ENCODE measurements at regions of chr7 and their contacts with region 1.

Region 1: DNA sequence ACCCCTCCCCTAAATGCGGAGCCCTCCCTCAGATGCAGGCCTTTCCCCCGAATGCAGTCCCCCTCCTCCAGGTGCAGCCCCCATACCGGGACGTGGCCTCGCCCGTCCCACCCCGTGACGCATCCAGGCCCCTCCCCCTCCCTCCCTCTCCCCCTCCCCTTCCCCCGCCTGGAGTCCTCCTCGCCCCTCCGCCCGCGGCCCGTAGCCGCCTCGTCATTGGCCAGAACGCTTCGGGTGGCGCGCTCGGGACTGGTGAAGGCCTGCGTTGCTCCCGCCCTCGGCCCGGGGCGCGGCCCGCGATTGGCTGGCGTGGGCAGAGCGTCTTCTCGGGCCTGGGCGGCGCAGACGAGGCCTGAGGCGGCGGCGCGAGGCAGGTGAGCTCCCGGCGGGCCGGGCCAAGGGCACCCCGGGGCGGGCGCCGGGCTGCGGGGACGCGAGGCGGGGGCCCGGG is 16.0 kb upstream of the SUN1 start:
- DNase-seq: peak; percentile 96 to 98 (median 97)
- H3K4me3 ChIP-seq: peak overlapping the region in 1 of 2 donors; percentile 56
- H3K4me3 Mint-ChIP-seq: peak overlapping the region; percentile 63 to 89 (median 77)
- H3K27ac ChIP-seq: peak overlapping the region; percentile 16
- H3K27ac Mint-ChIP-seq: peak overlapping the region in 1 of 7 donors; percentile 41
- H3K4me1 ChIP-seq: peaks cover 57% of the 10 kb centered on the region
- H3K4me1 Mint-ChIP-seq: peaks cover 46 to 74% (median 60%) of the 10 kb centered on the region in 4 donors
- H3K27me3 ChIP-seq: no peaks in the 10 kb centered on the region
- H3K27me3 Mint-ChIP-seq: no peaks in the 10 kb centered on the region

Region 2: GRCh38 chr7:831596-832166 is 15.4 kb after region 1 on chr7:
- CTCF ChIA-PET with region 1: interaction called, 18 read pairs
- POLR2A ChIA-PET with region 1: interaction called, 50 read pairs
- intact Hi-C with region 1: loop called (anchors 1 kb)
- DNase-seq: peak in 4 of 5 donors; percentile 39 to 58 (median 47)
- H3K4me3 ChIP-seq: peak overlapping the region in 1 of 2 donors; percentile 8
- H3K4me3 Mint-ChIP-seq: peak overlapping the region; percentile 81 to 91 (median 88)
- H3K27ac ChIP-seq: peak overlapping the region; percentile 73
- H3K27ac Mint-ChIP-seq: peak overlapping the region; percentile 96 to 99 (median 97)
- H3K4me1 ChIP-seq: peaks cover 41% of the 10 kb centered on the region
- H3K4me1 Mint-ChIP-seq: peaks cover 33 to 72% (median 49%) of the 10 kb centered on the region in 4 donors
- H3K27me3 ChIP-seq: no peaks in the 10 kb centered on the region
- H3K27me3 Mint-ChIP-seq: no peaks in the 10 kb centered on the region

Region 3: DNA sequence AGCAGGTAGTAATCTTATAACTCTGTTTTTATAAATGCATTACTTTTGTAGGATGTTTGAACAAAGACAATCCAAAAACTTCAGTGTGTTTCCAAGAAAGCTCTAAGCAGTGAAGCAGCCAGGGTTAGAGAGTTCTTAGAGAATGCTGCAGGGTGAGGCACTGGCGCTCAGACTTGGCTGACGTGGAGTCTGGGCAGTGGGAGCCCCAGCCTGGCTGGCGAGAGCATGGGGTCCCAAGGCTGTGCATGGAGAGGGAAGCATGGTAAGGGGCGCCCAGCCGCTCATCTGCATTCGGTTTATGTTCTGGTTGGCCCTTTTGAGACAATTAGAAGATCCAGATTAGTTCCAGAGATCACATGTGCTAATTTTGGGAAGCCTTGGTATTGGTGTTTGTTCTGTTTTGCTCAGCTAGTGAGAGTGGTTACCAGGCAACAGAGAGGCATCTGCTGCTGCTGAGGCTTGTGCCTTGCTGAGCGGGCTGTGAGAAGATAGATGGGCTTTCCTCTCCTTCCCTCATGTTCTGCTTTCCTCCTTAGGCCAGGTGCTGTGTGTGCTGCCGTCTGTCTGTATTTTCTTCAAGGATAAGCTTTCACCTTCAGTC is 26.2 kb after region 1 on chr7:
- CTCF ChIA-PET with region 1: no interaction called
- POLR2A ChIA-PET with region 1: no interaction called
- intact Hi-C with region 1: no loop called
- DNase-seq: no peak
- H3K4me3 ChIP-seq: no peak overlapping the region
- H3K4me3 Mint-ChIP-seq: no peak overlapping the region
- H3K27ac ChIP-seq: no peak overlapping the region
- H3K27ac Mint-ChIP-seq: no peak overlapping the region
- H3K4me1 ChIP-seq: no peaks in the 10 kb centered on the region
- H3K4me1 Mint-ChIP-seq: peaks cover 2 to 6% (median 4%) of the 10 kb centered on the region in 4 donors
- H3K27me3 ChIP-seq: no peaks in the 10 kb centered on the region
- H3K27me3 Mint-ChIP-seq: no peaks in the 10 kb centered on the region

Region 4: DNA sequence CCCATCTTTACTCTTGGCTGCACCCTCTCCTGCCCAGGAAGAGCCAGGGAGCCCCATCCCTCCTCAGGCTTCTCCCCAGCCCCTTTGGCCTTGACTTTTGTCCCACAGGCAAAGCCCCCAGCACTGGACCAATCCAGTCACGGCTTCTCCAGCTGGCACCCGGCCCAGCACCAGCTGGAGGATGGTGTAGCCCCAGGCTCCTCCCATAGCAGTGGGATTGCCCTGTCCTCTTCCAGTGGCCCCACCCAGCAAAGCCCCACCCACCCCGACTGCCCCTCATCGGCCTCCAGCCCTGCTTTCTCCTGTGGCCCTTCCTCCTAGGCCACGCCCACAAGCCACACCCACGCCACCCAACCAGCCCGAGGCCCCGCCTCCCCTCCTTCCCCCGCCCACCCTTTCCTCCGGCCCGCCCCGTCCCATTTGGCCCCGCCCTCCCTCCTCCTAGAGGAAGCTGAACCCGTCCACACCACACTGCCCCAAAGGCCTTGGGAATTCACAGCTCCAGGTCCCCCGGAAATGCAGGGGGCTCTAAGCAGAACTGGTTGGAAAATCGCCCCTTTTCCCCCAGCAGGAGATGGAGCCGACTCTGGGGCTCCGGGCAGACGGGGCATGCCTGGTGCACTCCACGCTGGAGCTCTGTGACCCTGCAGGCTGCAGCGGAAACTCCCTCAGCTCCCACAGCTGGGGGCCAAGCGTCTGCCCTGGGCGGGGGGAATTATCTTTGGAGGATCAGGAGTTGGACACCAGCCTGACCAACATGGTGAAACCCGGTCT is 85.2 kb after region 1 on chr7:
- CTCF ChIA-PET with region 1: no interaction called
- POLR2A ChIA-PET with region 1: no interaction called
- intact Hi-C with region 1: no loop called
- DNase-seq: peak in 1 of 5 donors; percentile 44
- H3K4me3 ChIP-seq: no peak overlapping the region
- H3K4me3 Mint-ChIP-seq: no peak overlapping the region
- H3K27ac ChIP-seq: no peak overlapping the region
- H3K27ac Mint-ChIP-seq: no peak overlapping the region
- H3K4me1 ChIP-seq: peaks cover 3% of the 10 kb centered on the region
- H3K4me1 Mint-ChIP-seq: no peaks in the 10 kb centered on the region
- H3K27me3 ChIP-seq: no peaks in the 10 kb centered on the region
- H3K27me3 Mint-ChIP-seq: peaks cover 0 to 3% of the 10 kb centered on the region in 2 donors

Region 5: DNA sequence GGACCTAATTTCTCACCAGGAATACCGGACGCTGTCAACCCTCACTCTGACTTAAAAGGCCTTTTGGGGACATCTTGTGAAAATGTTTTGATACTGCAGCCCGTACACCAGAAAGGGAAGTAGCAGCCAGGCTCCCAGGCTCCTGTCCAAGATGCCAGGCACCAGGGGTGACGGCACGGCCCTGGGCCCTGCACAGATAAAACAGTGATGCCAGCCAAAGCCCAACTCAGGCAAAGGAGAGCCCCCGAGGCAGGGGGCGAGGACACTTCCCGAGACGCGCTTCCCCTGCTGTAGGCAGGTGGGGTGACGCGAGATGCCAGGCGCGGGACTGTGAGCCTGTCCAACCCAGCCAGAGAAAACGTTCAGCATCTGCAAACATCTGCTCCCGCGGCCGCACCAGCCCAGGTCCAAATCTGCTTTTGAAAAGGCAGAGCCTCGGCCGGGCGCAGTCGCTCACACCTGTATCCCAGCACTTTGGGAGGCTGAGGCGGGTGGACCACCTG is 328.0 kb after region 1 on chr7:
- CTCF ChIA-PET with region 1: no interaction called
- POLR2A ChIA-PET with region 1: no interaction called
- intact Hi-C with region 1: no loop called
- DNase-seq: no peak
- H3K4me3 ChIP-seq: no peak overlapping the region
- H3K4me3 Mint-ChIP-seq: no peak overlapping the region
- H3K27ac ChIP-seq: no peak overlapping the region
- H3K27ac Mint-ChIP-seq: no peak overlapping the region
- H3K4me1 ChIP-seq: no peaks in the 10 kb centered on the region
- H3K4me1 Mint-ChIP-seq: peaks cover 0 to 2% (median 0%) of the 10 kb centered on the region in 4 donors
- H3K27me3 ChIP-seq: no peaks in the 10 kb centered on the region
- H3K27me3 Mint-ChIP-seq: no peaks in the 10 kb centered on the region

Measured in CD4-positive, alpha-beta memory T cell (primary cell).